ENCODE measurements at regions of chr11 and their contacts with region 1.

Region 1: GRCh38 chr11:47233989-47234668 is 14.5 kb downstream of the ACP2 start:
- DNase-seq: no peak
- H3K4me3 ChIP-seq: no peak overlapping the region
- CTCF ChIP-seq: peak; percentile 58

Region 2: DNA sequence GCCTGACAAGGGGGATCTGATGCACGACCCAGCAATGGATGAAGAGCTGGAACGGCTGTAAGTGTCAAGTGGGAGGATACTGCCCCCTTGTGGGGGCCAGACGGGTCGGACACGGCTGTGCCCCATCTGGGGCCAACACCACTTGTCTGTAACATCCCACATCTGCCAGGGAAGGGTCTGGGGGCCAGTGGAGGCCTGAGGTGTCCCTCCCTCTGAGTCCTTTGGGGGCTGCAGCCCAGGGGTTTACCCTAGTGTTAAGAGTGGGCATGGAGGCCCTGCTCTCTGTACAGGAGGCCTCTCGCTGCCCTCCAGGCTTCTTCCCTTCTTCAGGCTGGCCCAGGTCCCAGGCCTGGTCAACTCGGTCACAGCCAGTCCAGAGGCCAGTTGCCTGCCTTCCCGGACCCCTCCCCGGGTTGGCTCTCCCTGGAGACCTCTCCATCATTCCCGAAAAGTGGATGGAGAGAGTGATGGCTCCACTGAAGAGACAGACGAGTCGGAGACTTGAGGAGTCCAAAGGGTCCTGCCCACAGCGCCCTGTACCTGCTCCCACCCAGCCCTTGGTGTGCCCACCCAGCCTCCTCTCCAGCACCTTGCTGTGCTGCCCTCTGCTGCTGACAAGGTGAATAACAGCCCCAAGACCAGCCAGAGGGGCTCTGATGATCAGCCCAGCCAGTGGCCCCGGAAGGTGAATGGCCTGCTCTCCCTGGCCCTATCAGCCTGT is 72.8 kb before region 1 on chr11:
- in situ Hi-C with region 1: no loop called
- DNase-seq: peak; percentile 43
- H3K4me3 ChIP-seq: no peak overlapping the region
- CTCF ChIP-seq: peak; percentile 84

Region 3: DNA sequence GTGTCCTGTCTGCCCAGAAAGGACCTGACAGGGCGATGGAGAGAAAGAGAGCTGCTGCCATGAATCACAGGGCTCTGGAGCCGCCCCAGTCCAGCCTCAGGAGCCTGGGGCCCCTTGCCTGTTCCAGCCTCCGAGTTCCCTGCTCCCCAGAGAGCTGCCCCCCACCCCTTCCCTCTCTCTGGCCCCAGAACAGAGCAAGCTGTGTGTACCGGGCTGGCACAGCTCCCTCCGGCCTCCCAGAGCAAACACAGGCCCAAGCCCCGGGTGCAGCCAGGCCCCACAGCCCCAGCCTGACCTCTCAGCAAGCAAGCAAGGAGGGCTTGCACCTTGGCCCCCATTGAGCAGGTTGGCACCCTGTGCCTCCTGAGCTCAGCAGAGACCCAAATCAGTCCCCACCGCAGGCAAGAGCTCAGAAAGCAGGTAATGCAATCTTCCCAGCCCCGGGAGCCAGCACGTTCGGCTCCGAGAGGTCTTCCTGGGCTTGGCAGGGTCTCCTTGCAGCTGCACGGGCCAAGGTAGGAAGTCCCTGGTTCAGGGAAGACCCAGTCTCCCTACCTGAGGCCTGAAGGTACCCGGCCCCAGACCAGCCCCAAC is 49.3 kb before region 1 on chr11:
- in situ Hi-C with region 1: loop called (anchors 5 kb)
- DNase-seq: no peak
- H3K4me3 ChIP-seq: peak overlapping the region; percentile 62
- CTCF ChIP-seq: no peak

Region 4: DNA sequence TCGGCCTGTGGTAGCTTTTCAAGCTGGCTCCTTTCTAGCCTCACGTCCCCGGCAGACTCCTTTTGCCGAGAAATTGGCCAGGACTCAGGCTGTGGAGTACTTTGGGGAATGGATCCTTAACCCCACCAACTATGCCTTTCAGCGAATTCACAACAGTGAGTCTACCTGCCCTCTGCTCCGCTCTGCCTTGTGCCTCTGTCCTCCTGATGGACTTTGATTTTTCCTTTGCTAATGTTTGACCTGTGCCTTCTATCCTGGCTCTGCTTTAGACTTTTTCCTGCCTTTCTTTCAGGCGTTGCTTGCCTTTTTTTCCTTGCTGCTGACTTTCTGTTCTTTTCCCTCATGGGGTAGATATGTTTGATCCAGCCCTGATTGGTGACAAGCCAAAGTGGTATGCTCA is 48.3 kb after region 1 on chr11:
- in situ Hi-C with region 1: loop called (anchors 5 kb)
- DNase-seq: no peak
- H3K4me3 ChIP-seq: no peak overlapping the region
- CTCF ChIP-seq: no peak

Measured in astrocyte of the cerebellum (primary cell).